GM12878 (cell line): ENCODE measurements at regions of chr5 and their contacts with region 1.

Region 1: DNA sequence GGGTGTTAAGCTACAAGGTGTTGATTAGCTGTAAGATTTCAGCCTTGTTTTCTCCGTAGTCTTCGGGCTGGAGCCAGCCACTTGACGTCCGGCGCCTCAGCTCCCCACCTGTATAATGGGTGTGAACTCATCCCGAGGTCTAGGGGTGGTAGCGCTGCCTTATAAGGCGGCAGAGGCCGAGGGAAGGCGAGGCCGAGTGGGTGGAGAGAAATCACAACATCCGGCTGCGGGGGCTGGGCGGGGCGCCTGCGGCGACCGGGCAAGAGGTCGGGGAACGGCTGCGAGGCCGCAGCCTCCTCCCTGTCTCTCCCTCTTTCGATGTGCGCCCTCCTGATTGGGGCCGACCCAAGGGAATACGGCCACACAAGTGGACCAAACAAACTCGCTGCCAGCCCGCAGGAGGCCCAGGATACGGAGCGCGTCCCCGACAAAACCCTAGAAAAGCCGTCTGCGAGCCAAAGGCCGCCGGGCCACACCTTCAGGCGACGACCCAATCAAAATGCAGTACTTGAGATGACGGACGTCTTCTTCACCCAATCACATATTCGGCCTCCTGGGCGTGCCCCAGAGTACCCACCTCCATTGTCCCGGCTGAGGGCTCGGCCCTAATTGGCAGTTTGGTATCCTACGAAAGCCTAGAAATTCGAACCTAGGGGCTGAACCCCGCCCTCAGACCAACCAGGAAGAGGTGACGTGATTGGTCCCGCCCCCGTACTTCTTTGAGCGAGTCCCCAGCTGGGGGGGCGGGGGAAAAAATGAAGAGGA is 493 bp upstream of the GRK6 start:
- DNase-seq: peak; percentile 100
- ATAC-seq: peak; percentile 81
- H3K4me3 ChIP-seq: peak overlapping the region; percentile 62; the same call in 1 of the 2 replicates
- H3K27ac ChIP-seq: peak overlapping the region; percentile 99
- H3K4me1 ChIP-seq: peaks cover 37% of the 10 kb centered on the region
- H3K27me3 ChIP-seq: no peaks in the 10 kb centered on the region
- CTCF ChIP-seq: no peak
- EP300 ChIP-seq: peak in 1 of 2 experiments; percentile 43; a peak in 1 of 4 replicates
- POLR2A ChIP-seq: no peak
- RAD21 ChIP-seq: no peak

Region 2: DNA sequence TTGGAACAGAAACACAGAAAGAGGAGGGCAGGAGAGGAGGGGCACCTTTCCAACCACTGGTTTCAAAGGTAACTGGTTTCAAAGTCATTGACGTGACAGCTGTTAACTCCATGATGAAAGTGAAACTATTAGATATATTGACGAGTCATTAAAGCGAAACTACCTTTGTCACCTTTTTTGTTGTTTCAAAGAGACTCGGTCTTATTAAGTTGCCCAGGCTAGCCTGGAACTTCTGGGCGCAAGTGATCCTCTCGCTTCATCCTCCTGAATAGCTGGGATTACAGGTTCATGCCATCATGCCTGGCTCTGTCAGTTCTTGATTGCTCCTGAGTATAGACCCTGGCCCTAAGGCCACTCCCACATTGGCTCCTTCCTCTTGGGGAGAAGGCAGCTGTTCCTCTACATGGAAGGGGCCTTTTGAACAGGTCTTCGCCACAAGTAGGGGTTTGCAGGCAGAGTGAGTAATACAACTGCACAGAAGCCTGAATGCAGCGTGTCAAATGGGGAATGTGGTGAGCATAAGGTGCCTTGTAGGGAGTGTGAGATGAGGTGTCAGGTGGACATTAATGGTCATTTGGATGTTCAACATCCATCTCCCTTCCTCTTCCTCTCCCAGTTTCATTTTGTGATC is 13.3 kb before region 1 on chr5:
- CTCF ChIA-PET with region 1: interaction called, 15 read pairs
- POLR2A ChIA-PET with region 1: interaction called, 174 read pairs
- RAD21 ChIA-PET with region 1: interaction called, 8 read pairs
- SMC1A ChIA-PET with region 1: interaction called, 42 read pairs
- in situ Hi-C with region 1: no loop called
- intact Hi-C with region 1: loop called (anchors 1 kb)
- DNase-seq: peak; percentile 71
- ATAC-seq: peak; percentile 88
- H3K4me3 ChIP-seq: peak overlapping the region; percentile 33; the same call in 1 of the 2 replicates
- H3K27ac ChIP-seq: peak overlapping the region; percentile 83
- H3K4me1 ChIP-seq: peaks cover 18% of the 10 kb centered on the region
- H3K27me3 ChIP-seq: no peaks in the 10 kb centered on the region
- CTCF ChIP-seq: no peak
- EP300 ChIP-seq: peak in 1 of 2 experiments; percentile 74; a peak in 3 of 4 replicates
- POLR2A ChIP-seq: peak; percentile 66
- RAD21 ChIP-seq: no peak